CD4-positive, alpha-beta T cell (primary cell): ENCODE measurements at regions of chr19 and their contacts with region 1.

Region 1: DNA sequence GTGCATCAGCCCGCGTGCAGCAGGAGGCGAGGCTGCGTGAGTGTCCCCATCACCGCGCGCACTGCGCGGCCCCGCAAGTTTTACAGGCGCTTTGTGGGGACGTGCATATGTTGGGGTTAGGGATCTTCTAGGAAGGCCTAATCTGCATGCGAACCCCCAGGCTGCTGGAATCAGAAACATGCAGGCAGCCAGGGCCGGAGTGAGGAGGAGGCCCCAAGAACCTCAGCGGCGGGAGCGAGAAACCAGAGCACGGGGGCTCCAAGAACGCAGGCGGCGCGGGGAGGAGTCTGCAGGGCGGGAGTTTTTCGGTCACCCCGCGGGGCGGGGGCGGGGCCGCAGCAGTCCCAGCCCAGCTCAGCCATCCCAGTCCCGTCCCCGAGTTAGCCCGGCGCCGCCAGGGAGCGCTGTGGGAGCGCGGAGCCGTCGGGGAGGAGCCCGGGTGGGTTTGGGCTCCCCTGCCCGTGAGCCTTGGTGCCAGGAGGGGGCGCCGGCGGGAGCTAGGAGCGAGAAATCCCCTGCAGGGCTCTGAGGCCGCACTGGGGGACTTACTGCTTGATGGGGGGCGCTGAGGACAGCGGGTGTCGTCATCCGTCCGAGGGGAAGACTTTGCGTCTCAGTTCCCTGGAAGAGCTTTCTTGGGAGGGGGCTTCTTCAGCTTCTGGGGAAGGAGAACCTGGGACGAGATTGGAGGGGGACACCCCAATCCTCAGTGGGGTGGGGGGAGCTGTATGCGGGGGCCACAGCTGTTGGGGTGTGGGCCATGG is 933 bp upstream of the NRTN start:
- DNase-seq: peak; percentile 86 to 97 (median 90)
- ATAC-seq: peak; percentile 97
- H3K4me3 ChIP-seq: peak overlapping the region; percentile 47
- H3K4me3 Mint-ChIP-seq: peak overlapping the region; percentile 83
- H3K27ac ChIP-seq: no peak overlapping the region
- H3K27ac Mint-ChIP-seq: peak overlapping the region; percentile 68
- H3K4me1 ChIP-seq: peaks cover 36% of the 10 kb centered on the region
- H3K4me1 Mint-ChIP-seq: peaks cover 18% of the 10 kb centered on the region
- H3K27me3 ChIP-seq: peaks cover 26 to 28% of the 10 kb centered on the region in 2 experiments
- H3K27me3 Mint-ChIP-seq: peaks cover 25% of the 10 kb centered on the region
- CTCF ChIP-seq: peak; percentile 81

Region 2: GRCh38 chr19:5827891-5828660 is 24.1 kb after region 1 on chr19:
- CTCF ChIA-PET with region 1: interaction called, 30 read pairs
- POLR2A ChIA-PET with region 1: interaction called, 30 read pairs
- intact Hi-C with region 1: loop called in 1 of 2 experiments (anchors 2 kb)
- DNase-seq: peak; percentile 85 to 98 (median 92)
- ATAC-seq: peak; percentile 81
- H3K4me3 ChIP-seq: peak overlapping the region; percentile 86
- H3K4me3 Mint-ChIP-seq: peak overlapping the region; percentile 98
- H3K27ac ChIP-seq: peak overlapping the region; percentile 69 to 86
- H3K27ac Mint-ChIP-seq: peak overlapping the region; percentile 95
- H3K4me1 ChIP-seq: peaks cover 31% of the 10 kb centered on the region
- H3K4me1 Mint-ChIP-seq: peaks cover 18% of the 10 kb centered on the region
- H3K27me3 ChIP-seq: peaks cover 0 to 3% of the 10 kb centered on the region in 2 experiments
- H3K27me3 Mint-ChIP-seq: no peaks in the 10 kb centered on the region
- CTCF ChIP-seq: no peak

Region 3: GRCh38 chr19:5850743-5851293 is 46.9 kb after region 1 on chr19:
- CTCF ChIA-PET with region 1: no interaction called
- POLR2A ChIA-PET with region 1: no interaction called
- intact Hi-C with region 1: no loop called
- DNase-seq: no peak
- ATAC-seq: no peak
- H3K4me3 ChIP-seq: no peak overlapping the region
- H3K4me3 Mint-ChIP-seq: no peak overlapping the region
- H3K27ac ChIP-seq: no peak overlapping the region
- H3K27ac Mint-ChIP-seq: no peak overlapping the region
- H3K4me1 ChIP-seq: no peaks in the 10 kb centered on the region
- H3K4me1 Mint-ChIP-seq: no peaks in the 10 kb centered on the region
- H3K27me3 ChIP-seq: no peaks in the 10 kb centered on the region
- H3K27me3 Mint-ChIP-seq: no peaks in the 10 kb centered on the region
- CTCF ChIP-seq: no peak

Region 4: DNA sequence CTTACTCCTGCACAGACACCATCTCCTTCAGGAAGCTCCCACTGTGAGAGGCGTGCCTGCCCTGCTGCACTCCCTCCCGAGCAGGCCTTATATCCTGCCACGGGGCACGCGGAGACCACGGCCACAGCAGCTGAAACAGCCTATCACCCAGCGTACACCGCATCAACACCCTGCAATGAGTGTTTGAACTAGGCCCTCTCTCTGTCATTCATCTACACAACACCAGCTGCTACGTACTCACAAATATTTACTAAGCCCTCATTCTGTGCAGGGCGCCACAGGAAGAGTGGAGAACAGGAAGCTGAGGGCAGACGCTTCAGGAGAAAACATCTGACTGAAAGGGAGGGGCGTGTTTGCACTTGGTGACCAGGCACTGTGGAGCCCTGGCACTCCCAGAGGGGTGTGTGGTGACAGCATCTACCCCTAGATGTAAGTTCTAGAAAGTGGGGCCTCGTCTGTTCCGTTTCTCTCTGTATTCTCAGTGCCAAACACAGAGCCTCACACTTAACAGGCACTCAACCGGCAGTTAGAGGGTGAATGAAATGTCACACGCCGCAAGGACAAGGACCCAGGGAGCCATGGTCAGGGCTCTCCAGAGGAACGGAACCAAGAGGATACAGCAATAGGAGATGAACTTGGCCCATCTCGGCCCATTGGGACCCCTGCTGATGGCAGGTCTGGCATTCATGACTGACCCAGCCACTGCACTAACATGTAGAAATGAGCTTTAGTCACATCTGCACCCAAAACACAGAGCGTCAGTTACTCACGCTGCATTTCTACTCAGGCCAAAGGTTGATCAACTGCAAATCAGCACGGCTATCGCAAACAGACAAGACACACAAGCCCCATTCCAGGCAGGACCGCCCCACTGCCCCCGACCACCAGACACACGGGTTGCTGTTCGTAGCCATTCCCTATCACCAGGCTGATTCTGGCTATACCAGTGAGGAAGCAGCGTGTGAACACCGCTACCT is 158.3 kb after region 1 on chr19:
- CTCF ChIA-PET with region 1: interaction called, 12 read pairs
- POLR2A ChIA-PET with region 1: interaction called, 5 read pairs
- intact Hi-C with region 1: no loop called
- DNase-seq: peak; percentile 60 to 93 (median 79)
- ATAC-seq: peak; percentile 93
- H3K4me3 ChIP-seq: peak overlapping the region; percentile 41
- H3K4me3 Mint-ChIP-seq: peak overlapping the region; percentile 81
- H3K27ac ChIP-seq: peak overlapping the region; percentile 86 to 91
- H3K27ac Mint-ChIP-seq: peak overlapping the region; percentile 98
- H3K4me1 ChIP-seq: peaks cover 94% of the 10 kb centered on the region
- H3K4me1 Mint-ChIP-seq: peaks cover 97% of the 10 kb centered on the region
- H3K27me3 ChIP-seq: no peaks in the 10 kb centered on the region
- H3K27me3 Mint-ChIP-seq: no peaks in the 10 kb centered on the region
- CTCF ChIP-seq: no peak

Region 5: GRCh38 chr19:5977785-5978605 is 174.1 kb after region 1 on chr19 and contains the start of gene RANBP3:
- CTCF ChIA-PET with region 1: interaction called, 6 read pairs
- POLR2A ChIA-PET with region 1: interaction called, 7 read pairs
- intact Hi-C with region 1: loop called (anchors 5 kb)
- DNase-seq: peak; percentile 95 to 100 (median 99)
- ATAC-seq: peak; percentile 92
- H3K4me3 ChIP-seq: peak within 1 kb of the TSS; percentile 95
- H3K4me3 Mint-ChIP-seq: peak within 1 kb of the TSS; percentile 100
- H3K27ac ChIP-seq: peak within 1 kb of the TSS; percentile 78 to 85
- H3K27ac Mint-ChIP-seq: peak within 1 kb of the TSS; percentile 94
- H3K4me1 ChIP-seq: peaks cover 66% of the 10 kb centered on the region
- H3K4me1 Mint-ChIP-seq: peaks cover 52% of the 10 kb centered on the region
- H3K27me3 ChIP-seq: no peaks in the 10 kb centered on the region
- H3K27me3 Mint-ChIP-seq: no peaks in the 10 kb centered on the region
- CTCF ChIP-seq: no peak
- total RNA-seq, gene RANBP3: 82.7 to 88.7 TPM